ENCODE measurements at regions of chr6 and their contacts with region 1.

Region 1: GRCh38 chr6:27809939-27810767 is 102.0 kb downstream of the OR2B2 start:
- DNase-seq: peak in 1 of 2 experiments; percentile 78
- H3K4me3 ChIP-seq: peak overlapping the region; percentile 78 to 96 (median 89)
- H3K27ac ChIP-seq: peak overlapping the region; percentile 84
- H3K4me1 ChIP-seq: peaks cover 0 to 6% (median 3%) of the 10 kb centered on the region in 4 experiments; a peak in 4 of 7 replicates
- H3K27me3 ChIP-seq: no peaks in the 10 kb centered on the region
- CTCF ChIP-seq: peak in 1 of 3 experiments; percentile 6; a peak in 1 of 4 replicates
- EP300 ChIP-seq: no peak
- POLR2A ChIP-seq: peak; percentile 98 to 100
- RAD21 ChIP-seq: no peak

Region 2: DNA sequence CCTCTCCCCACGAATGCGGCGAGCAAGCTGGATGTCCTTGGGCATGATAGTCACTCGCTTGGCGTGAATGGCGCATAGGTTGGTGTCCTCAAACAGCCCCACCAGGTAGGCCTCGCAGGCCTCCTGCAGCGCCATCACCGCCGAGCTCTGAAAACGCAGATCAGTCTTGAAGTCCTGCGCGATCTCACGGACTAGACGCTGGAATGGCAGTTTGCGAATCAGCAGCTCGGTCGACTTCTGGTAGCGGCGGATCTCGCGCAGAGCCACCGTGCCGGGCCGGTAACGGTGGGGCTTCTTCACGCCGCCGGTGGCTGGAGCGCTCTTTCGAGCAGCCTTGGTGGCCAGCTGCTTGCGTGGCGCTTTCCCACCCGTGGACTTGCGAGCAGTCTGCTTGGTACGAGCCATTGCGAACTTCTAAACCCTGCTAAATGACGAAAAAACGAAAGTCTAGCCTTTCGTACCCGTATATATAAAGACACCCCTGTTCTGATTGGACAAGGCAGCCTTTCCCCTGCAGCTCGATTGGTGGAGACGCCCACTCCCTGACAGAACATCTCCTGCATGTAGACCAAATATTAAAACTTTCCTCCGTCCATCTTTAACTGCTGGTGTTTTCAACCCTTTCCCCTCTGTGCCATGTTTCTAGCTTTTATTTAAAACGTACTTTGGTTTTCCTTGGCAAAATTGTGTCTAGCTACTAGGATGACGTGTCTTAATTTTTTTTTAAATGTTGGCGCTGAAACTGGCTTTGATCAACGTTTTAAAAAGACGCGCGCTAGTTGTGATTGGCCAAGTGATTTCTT is 1613.1 kb before region 1 on chr6:
- CTCF ChIA-PET with region 1: no interaction called
- POLR2A ChIA-PET with region 1: interaction called, 79 read pairs
- DNase-seq: peak in 1 of 2 experiments; percentile 76
- H3K4me3 ChIP-seq: peak overlapping the region; percentile 85 to 98 (median 89)
- H3K27ac ChIP-seq: peak overlapping the region; percentile 82
- H3K4me1 ChIP-seq: peaks cover 0 to 1% (median 0%) of the 10 kb centered on the region in 4 experiments; a peak in 1 of 7 replicates
- H3K27me3 ChIP-seq: no peaks in the 10 kb centered on the region
- CTCF ChIP-seq: no peak
- EP300 ChIP-seq: no peak
- POLR2A ChIP-seq: peak; percentile 99
- RAD21 ChIP-seq: no peak

Region 3: DNA sequence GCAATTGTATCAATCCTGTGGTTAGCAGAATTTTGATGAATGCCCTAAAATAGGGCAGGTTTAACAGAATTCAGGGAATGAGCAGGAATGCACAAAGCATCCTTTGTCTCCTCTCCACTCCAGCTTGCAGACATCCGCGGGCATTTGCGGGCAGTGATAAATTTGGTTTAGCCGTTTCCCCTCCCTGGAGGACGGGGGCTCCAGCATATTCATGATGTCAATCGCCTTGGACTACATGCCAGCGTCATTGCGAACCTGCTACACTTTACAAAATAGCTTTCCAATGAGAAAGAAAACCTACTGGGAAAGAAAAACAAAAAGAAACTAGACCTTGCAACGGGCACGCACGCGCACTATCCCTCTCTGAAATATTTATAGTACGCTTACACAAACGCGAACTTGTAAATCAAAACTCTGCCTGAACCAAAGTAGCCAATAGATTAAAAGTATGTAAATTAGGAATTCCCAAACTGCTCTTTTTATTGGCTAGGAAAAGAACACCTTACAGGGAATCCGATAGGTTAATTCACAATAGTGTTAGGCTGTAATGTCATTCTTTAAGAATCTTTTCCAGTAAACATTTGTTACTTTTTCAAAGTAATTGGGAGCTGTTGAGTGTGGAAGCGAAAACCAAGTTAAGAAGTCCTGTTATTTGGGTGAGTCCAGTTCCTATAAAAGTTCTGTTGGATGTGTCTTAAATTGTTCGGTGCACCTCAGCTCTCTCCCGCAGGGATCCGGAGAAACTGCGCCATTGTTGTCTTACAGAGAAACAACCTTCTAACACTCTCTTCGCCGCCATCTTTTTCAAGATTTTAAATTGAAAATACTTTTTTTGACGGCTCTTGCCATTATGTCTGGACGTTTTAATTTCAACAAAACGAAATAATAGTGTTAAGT is 1586.3 kb before region 1 on chr6:
- CTCF ChIA-PET with region 1: no interaction called
- POLR2A ChIA-PET with region 1: interaction called, 37 read pairs
- DNase-seq: no peak
- H3K4me3 ChIP-seq: peak overlapping the region; percentile 61 to 94 (median 76)
- H3K27ac ChIP-seq: peak overlapping the region; percentile 91
- H3K4me1 ChIP-seq: peaks cover 0 to 7% (median 3%) of the 10 kb centered on the region in 4 experiments; a peak in 5 of 7 replicates
- H3K27me3 ChIP-seq: no peaks in the 10 kb centered on the region
- CTCF ChIP-seq: no peak
- EP300 ChIP-seq: no peak
- POLR2A ChIP-seq: peak; percentile 48 to 76; a peak in 2 of 3 replicates
- RAD21 ChIP-seq: no peak

Region 4: GRCh38 chr6:26270903-26271667 is 1539.1 kb before region 1 on chr6:
- CTCF ChIA-PET with region 1: no interaction called
- POLR2A ChIA-PET with region 1: interaction called, 31 read pairs
- DNase-seq: peak in 1 of 2 experiments; percentile 85
- H3K4me3 ChIP-seq: peak overlapping the region; percentile 73 to 97 (median 88)
- H3K27ac ChIP-seq: peak overlapping the region; percentile 93
- H3K4me1 ChIP-seq: peaks cover 0 to 10% (median 4%) of the 10 kb centered on the region in 4 experiments; a peak in 4 of 7 replicates
- H3K27me3 ChIP-seq: no peaks in the 10 kb centered on the region
- CTCF ChIP-seq: no peak
- EP300 ChIP-seq: no peak
- POLR2A ChIP-seq: peak; percentile 94 to 100
- RAD21 ChIP-seq: no peak

Region 5: GRCh38 chr6:27728442-27728841 is 81.7 kb before region 1 on chr6:
- CTCF ChIA-PET with region 1: no interaction called
- POLR2A ChIA-PET with region 1: no interaction called
- DNase-seq: no peak
- H3K4me3 ChIP-seq: no peak overlapping the region
- H3K27ac ChIP-seq: no peak overlapping the region
- H3K4me1 ChIP-seq: no peaks in the 10 kb centered on the region
- H3K27me3 ChIP-seq: no peaks in the 10 kb centered on the region; a peak in 1 of 7 replicates
- CTCF ChIP-seq: no peak
- EP300 ChIP-seq: no peak
- POLR2A ChIP-seq: no peak
- RAD21 ChIP-seq: no peak

Region 6: DNA sequence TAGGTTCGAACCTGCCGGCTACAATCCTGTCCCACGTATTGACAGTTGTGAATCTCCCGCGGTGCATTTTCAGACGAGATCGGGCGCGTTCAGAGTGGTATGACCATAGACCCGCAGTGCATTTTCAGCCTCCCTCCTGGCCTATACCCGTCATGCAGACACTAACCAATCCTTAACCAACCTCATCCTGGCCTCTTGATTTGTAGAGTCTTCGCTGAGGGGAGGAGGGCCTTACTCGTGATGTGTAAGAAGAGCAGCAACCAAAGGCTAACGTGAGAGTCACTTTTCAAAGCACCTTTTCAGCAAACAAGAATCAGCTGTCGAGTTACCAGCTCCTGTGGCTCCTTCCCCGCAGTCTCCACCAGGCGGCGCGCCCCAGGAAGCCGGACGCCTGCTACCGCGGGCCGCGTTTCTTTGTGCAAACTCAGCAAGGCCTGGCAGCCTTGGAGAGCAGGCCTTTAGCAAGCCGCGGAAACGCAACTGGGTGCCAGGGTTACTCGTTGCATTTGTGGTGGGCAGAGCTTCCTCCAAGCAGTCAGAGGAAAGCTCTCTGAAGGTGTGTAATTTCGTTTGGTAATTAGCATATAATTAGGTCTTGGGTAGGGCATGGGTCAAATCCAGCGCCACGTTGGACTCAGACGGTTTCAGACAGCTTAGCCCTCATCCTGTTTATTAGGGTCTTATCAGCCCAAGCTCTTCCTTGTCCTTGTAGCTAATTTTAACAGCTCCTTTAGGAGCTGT is 37.7 kb before region 1 on chr6:
- CTCF ChIA-PET with region 1: no interaction called
- POLR2A ChIA-PET with region 1: interaction called, 32 read pairs
- DNase-seq: peak in 1 of 2 experiments; percentile 94
- H3K4me3 ChIP-seq: peak overlapping the region; percentile 15 to 59 (median 48); a peak in 7 of 8 replicates
- H3K27ac ChIP-seq: no peak overlapping the region
- H3K4me1 ChIP-seq: peaks cover 6 to 13% (median 12%) of the 10 kb centered on the region in 4 experiments; a peak in 6 of 7 replicates
- H3K27me3 ChIP-seq: peaks cover 31 to 64% (median 59%) of the 10 kb centered on the region in 4 experiments
- CTCF ChIP-seq: peak; percentile 85 to 87 (median 86)
- EP300 ChIP-seq: peak in 1 of 2 experiments; percentile 49; a peak in 1 of 3 replicates
- POLR2A ChIP-seq: no peak
- RAD21 ChIP-seq: peak; percentile 52 to 71

Region 7: DNA sequence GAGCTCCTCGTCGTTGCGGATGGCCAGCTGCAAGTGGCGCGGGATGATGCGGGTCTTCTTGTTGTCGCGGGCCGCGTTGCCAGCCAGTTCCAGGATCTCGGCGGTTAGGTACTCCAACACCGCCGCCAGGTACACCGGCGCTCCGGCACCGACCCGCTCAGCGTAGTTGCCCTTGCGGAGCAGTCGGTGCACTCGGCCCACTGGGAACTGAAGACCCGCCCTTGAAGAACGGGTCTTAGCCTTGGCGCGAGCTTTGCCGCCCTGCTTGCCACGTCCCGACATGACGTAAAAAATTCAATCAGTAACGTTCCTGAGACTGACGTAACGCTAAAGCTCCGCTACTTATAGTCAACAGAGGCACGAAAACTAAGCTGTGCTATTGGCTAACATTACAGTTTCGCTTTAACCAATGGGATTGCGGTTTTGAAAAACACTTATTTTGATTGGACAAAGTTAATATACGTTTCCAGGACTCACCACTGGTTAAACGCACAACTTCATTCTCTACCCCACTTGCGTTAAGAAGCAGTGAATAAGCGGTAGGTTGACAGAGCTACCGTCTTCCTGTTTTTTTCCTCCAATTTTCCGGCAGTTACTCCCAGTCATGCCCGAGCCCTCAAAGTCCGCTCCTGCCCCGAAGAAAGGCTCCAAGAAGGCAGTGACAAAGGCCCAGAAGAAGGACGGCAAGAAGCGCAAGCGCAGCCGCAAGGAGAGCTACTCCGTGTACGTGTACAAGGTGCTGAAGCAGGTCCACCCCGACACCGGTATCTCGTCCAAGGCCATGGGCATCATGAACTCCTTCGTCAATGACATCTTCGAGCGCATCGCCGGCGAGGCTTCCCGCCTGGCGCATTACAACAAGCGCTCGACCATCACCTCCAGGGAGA is 28.1 kb after region 1 on chr6:
- CTCF ChIA-PET with region 1: interaction called, 4 read pairs
- POLR2A ChIA-PET with region 1: interaction called, 680 read pairs
- DNase-seq: peak; percentile 76 to 87
- H3K4me3 ChIP-seq: peak overlapping the region; percentile 77 to 96 (median 93)
- H3K27ac ChIP-seq: peak overlapping the region; percentile 98
- H3K4me1 ChIP-seq: peaks cover 0 to 5% (median 2%) of the 10 kb centered on the region in 4 experiments; a peak in 1 of 7 replicates
- H3K27me3 ChIP-seq: no peaks in the 10 kb centered on the region
- CTCF ChIP-seq: no peak
- EP300 ChIP-seq: no peak
- POLR2A ChIP-seq: peak; percentile 88 to 91
- RAD21 ChIP-seq: no peak

Region 8: GRCh38 chr6:27902335-27903314 is 92.5 kb after region 1 on chr6:
- CTCF ChIA-PET with region 1: interaction called, 4 read pairs
- POLR2A ChIA-PET with region 1: interaction called, 924 read pairs
- DNase-seq: peak in 1 of 2 experiments; percentile 94
- H3K4me3 ChIP-seq: peak overlapping the region; percentile 79 to 98 (median 82)
- H3K27ac ChIP-seq: peak overlapping the region; percentile 57; the same call in 1 of the 2 replicates
- H3K4me1 ChIP-seq: no peaks in the 10 kb centered on the region
- H3K27me3 ChIP-seq: no peaks in the 10 kb centered on the region
- CTCF ChIP-seq: no peak
- EP300 ChIP-seq: no peak
- POLR2A ChIP-seq: peak in 1 of 2 experiments; percentile 46; a peak in 1 of 3 replicates
- RAD21 ChIP-seq: no peak

Measured in H1 (cell line).